Activated B cell treated with CpG ODN at 0.5 μM for 24 hours (primary cell): ENCODE measurements at regions of chr3 and their contacts with region 1.

Region 1: GRCh38 chr3:66971891-66972551 is 26.1 kb upstream of the KBTBD8 start:
- DNase-seq: peak; percentile 40
- ATAC-seq: peak; percentile 96
- H3K4me3 Mint-ChIP-seq: peak overlapping the region; percentile 84
- H3K27ac Mint-ChIP-seq: peak overlapping the region; percentile 88
- H3K4me1 Mint-ChIP-seq: peaks cover 15% of the 10 kb centered on the region
- H3K27me3 Mint-ChIP-seq: no peaks in the 10 kb centered on the region
- CTCF ChIP-seq: peak; percentile 42

Region 2: GRCh38 chr3:66938338-66938963 is 33.6 kb before region 1 on chr3:
- CTCF ChIA-PET with region 1: interaction called, 25 read pairs
- POLR2A ChIA-PET with region 1: interaction called, 4 read pairs
- intact Hi-C with region 1: loop called (anchors 1 kb)
- DNase-seq: no peak
- ATAC-seq: peak; percentile 56
- H3K4me3 Mint-ChIP-seq: no peak overlapping the region
- H3K27ac Mint-ChIP-seq: no peak overlapping the region
- H3K4me1 Mint-ChIP-seq: no peaks in the 10 kb centered on the region
- H3K27me3 Mint-ChIP-seq: peaks cover 5% of the 10 kb centered on the region
- CTCF ChIP-seq: peak; percentile 47

Region 3: GRCh38 chr3:66998113-66998903 is 26.3 kb after region 1 on chr3 and contains the start of gene KBTBD8:
- CTCF ChIA-PET with region 1: interaction called, 14 read pairs
- POLR2A ChIA-PET with region 1: interaction called, 16 read pairs
- intact Hi-C with region 1: loop called (anchors 1 kb)
- DNase-seq: peak; percentile 88
- ATAC-seq: peak; percentile 88
- H3K4me3 Mint-ChIP-seq: peak within 1 kb of the TSS; percentile 88
- H3K27ac Mint-ChIP-seq: peak within 1 kb of the TSS; percentile 93
- H3K4me1 Mint-ChIP-seq: peaks cover 47% of the 10 kb centered on the region
- H3K27me3 Mint-ChIP-seq: peaks cover 3% of the 10 kb centered on the region
- CTCF ChIP-seq: no peak
- total RNA-seq, gene KBTBD8: 45.4 and 53.3 TPM in 2 replicates

Region 4: GRCh38 chr3:67037615-67038014 is 65.6 kb after region 1 on chr3:
- CTCF ChIA-PET with region 1: interaction called, 72 read pairs
- POLR2A ChIA-PET with region 1: interaction called, 5 read pairs
- intact Hi-C with region 1: loop called (anchors 1 kb)
- DNase-seq: no peak
- ATAC-seq: peak; percentile 28
- H3K4me3 Mint-ChIP-seq: no peak overlapping the region
- H3K27ac Mint-ChIP-seq: no peak overlapping the region
- H3K4me1 Mint-ChIP-seq: peaks cover 5% of the 10 kb centered on the region
- H3K27me3 Mint-ChIP-seq: no peaks in the 10 kb centered on the region
- CTCF ChIP-seq: no peak

Region 5: DNA sequence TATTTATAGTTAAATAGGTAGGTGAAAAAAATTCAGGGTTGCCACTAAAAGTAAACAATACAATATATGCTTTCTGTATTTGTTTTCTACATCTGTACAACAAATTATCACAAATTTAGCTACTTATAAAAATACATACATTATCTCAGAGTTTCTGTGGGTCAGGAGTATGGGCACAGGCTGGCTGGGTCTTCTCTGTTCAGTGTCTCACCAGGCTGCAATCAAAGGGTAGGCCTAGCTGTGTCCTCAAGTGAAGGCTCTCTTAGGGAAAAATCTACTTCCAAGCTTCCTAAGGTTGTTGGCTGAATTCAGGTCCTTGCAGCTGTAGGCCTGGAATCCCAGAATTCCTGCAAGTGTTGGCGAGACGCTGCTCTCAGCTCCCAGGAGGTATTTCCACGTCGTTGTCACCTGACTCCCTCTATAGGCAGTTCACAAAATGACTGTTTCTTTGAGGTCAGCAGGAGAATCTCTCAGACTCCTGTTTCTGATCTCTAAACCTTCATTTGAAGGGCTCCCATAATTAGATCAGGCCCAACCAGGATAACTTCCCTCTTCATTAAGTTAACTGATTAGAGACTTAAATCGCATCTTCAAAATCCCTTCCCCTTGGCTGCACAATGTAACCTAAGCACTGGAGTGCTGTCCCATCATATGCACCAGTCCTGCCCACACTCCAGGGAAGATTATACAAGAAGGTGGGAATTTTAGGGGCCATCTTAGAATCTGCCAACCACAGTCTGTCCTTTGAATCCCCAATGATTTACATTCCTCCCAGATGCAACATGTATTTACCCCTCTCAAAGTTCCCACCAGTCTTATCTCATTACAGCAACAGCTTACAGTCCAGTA is 385.8 kb after region 1 on chr3:
- CTCF ChIA-PET with region 1: interaction called, 20 read pairs
- POLR2A ChIA-PET with region 1: no interaction called
- intact Hi-C with region 1: loop called (anchors 1 kb)
- DNase-seq: no peak
- ATAC-seq: no peak
- H3K4me3 Mint-ChIP-seq: no peak overlapping the region
- H3K27ac Mint-ChIP-seq: no peak overlapping the region
- H3K4me1 Mint-ChIP-seq: no peaks in the 10 kb centered on the region
- H3K27me3 Mint-ChIP-seq: no peaks in the 10 kb centered on the region
- CTCF ChIP-seq: no peak

Region 6: GRCh38 chr3:67610458-67610857 is 638.4 kb after region 1 on chr3:
- CTCF ChIA-PET with region 1: no interaction called
- POLR2A ChIA-PET with region 1: no interaction called
- intact Hi-C with region 1: no loop called
- DNase-seq: no peak
- ATAC-seq: no peak
- H3K4me3 Mint-ChIP-seq: no peak overlapping the region
- H3K27ac Mint-ChIP-seq: no peak overlapping the region
- H3K4me1 Mint-ChIP-seq: peaks cover 5% of the 10 kb centered on the region
- H3K27me3 Mint-ChIP-seq: no peaks in the 10 kb centered on the region
- CTCF ChIP-seq: no peak

Region 7: DNA sequence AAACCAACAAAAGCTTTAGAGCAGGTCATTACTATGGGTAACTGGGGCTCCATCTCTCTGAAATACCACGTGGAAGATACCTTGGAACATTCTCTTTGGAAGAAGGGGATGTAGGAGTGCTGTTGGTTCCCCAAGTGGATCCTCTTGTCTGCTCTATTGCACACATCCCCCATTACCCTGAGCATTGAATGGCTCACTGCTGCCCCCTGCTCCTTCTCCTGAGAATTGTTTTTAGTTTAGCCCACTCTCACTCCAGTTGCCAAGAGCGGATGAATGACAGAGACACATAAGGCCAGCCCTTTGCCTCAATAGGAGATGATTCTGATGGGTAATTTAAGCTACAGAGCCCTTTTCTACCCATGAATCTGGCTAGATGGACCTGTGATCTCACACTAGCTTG is 818.0 kb after region 1 on chr3:
- CTCF ChIA-PET with region 1: interaction called, 9 read pairs
- POLR2A ChIA-PET with region 1: no interaction called
- intact Hi-C with region 1: loop called (anchors 1 kb)
- DNase-seq: no peak
- ATAC-seq: peak; percentile 50
- H3K4me3 Mint-ChIP-seq: no peak overlapping the region
- H3K27ac Mint-ChIP-seq: no peak overlapping the region
- H3K4me1 Mint-ChIP-seq: no peaks in the 10 kb centered on the region
- H3K27me3 Mint-ChIP-seq: peaks cover 11% of the 10 kb centered on the region
- CTCF ChIP-seq: no peak